CD8-positive, alpha-beta T cell (primary cell): ENCODE measurements at regions of chr16 and their contacts with region 1.

Region 1: DNA sequence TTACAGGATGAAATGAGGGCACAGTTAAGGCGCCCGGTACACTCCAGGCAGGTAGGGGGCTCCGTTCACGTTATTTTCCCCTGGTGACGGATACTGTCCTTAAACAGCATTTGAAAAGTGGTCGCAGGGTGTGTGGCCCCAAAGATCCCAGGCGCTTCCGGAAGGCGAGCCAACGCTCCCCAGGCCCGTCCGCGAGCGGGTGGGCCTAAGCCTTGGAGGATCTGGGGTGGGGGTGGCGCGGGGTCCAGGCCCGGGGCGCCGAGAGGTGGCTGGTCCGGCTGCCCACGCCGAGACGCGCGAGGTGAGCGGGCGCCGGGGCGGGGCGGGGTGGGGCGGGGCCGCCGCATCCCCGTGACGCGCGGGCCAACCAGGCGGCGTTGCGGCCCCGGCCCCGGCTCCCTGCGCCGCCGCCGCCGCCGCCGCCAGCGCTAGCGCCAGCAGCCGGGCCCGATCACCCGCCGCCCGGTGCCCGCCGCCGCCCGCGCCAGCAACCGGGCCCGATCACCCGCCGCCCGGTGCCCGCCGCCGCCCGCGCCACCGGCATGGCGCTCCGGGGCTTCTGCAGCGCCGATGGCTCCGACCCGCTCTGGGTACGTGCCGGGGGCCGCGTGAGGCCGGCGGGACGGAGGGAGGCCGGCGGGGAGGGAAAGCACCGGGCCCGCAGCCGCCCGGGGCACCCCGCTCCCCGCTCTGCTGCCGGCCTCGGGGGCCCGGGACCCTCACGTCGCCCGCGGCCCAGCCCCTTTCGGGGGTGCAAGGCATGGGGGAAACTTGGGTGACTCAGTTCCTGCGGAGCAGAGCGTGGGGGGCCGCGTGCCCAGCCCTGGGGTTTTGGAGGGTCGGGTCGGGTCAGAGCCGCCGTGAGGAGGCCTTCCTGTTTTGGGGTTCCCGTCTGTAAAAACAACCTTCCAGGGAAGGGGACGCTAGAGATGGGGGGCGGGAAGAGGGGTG is at the start of gene ABCC1:
- DNase-seq: peak; percentile 16 to 86 (median 72)
- ATAC-seq: peak; percentile 70
- H3K4me3 ChIP-seq: peak within 1 kb of the TSS; percentile 73 to 78
- H3K4me3 Mint-ChIP-seq: peak within 1 kb of the TSS; percentile 95
- H3K27ac ChIP-seq: peak within 1 kb of the TSS; percentile 75 to 77
- H3K27ac Mint-ChIP-seq: peak within 1 kb of the TSS; percentile 96
- H3K4me1 ChIP-seq: peaks cover 27% of the 10 kb centered on the region
- H3K4me1 Mint-ChIP-seq: peaks cover 34% of the 10 kb centered on the region
- H3K27me3 ChIP-seq: no peaks in the 10 kb centered on the region
- H3K27me3 Mint-ChIP-seq: no peaks in the 10 kb centered on the region
- CTCF ChIP-seq: peak; percentile 28
- total RNA-seq, gene ABCC1: 41.1 to 41.2 TPM

Region 2: DNA sequence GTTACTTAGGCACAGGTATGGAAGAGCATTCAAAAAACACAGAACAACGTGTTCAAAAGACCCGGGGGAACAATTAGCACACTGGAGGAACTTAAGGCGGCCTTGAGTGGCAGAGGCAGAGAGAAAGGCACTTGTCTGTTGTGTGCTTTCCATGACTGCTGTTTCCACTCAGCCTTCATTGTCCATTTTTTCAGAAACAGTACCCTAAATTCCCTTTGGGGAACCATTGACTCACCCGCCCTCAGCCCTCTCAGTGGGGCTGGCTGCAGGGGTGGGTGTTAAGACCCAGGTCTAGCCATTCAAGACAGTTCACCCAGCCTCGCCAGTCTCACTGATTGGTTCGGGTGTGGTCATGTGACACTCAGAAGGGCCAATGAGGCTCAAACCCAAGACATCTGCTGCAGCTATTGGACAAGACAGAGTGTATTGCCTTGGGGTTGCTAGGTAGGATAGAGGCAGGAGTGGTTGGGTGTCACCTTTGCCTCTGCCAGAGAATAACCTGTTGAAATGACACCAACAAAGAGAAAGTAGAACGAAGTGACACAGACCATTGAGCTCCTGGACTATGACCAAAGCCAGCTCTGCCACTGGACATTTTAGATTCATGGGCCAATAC is 41.5 kb before region 1 on chr16:
- CTCF ChIA-PET with region 1: no interaction called
- POLR2A ChIA-PET with region 1: no interaction called
- intact Hi-C with region 1: no loop called
- DNase-seq: peak in 3 of 9 experiments; percentile 35 to 59 (median 50)
- ATAC-seq: peak; percentile 89
- H3K4me3 ChIP-seq: no peak overlapping the region
- H3K4me3 Mint-ChIP-seq: no peak overlapping the region
- H3K27ac ChIP-seq: no peak overlapping the region
- H3K27ac Mint-ChIP-seq: no peak overlapping the region
- H3K4me1 ChIP-seq: peaks cover 8% of the 10 kb centered on the region
- H3K4me1 Mint-ChIP-seq: peaks cover 11% of the 10 kb centered on the region
- H3K27me3 ChIP-seq: no peaks in the 10 kb centered on the region
- H3K27me3 Mint-ChIP-seq: no peaks in the 10 kb centered on the region
- CTCF ChIP-seq: no peak

Region 3: DNA sequence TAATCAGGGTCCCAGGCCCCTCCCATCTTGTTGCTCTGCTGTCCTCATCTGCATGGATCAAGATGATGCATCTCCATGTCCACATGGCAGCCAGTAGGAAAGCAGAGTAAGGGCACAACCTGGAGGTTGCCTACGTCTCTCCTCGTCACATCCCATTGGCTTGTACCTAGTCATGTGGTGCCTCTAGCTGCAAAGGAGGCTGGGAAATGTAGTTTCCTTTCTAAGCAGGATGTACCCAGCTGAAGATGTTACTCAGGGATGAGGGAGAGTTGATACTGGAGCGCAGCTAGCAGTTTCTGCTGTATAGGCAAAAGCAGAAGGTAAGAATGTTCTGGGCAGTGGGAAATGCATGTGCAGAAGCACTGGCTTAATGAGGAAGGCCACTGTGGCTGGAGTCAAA is 20.7 kb after region 1 on chr16:
- CTCF ChIA-PET with region 1: no interaction called
- POLR2A ChIA-PET with region 1: no interaction called
- intact Hi-C with region 1: no loop called
- DNase-seq: peak in 2 of 9 experiments; percentile 32 to 53
- ATAC-seq: peak; percentile 75
- H3K4me3 ChIP-seq: no peak overlapping the region
- H3K4me3 Mint-ChIP-seq: no peak overlapping the region
- H3K27ac ChIP-seq: no peak overlapping the region
- H3K27ac Mint-ChIP-seq: no peak overlapping the region
- H3K4me1 ChIP-seq: peaks cover 8% of the 10 kb centered on the region
- H3K4me1 Mint-ChIP-seq: peaks cover 40% of the 10 kb centered on the region
- H3K27me3 ChIP-seq: no peaks in the 10 kb centered on the region
- H3K27me3 Mint-ChIP-seq: no peaks in the 10 kb centered on the region
- CTCF ChIP-seq: no peak

Region 4: GRCh38 chr16:15993946-15994665 is 44.6 kb after region 1 on chr16:
- CTCF ChIA-PET with region 1: no interaction called
- POLR2A ChIA-PET with region 1: no interaction called
- intact Hi-C with region 1: loop called in 1 of 2 experiments (anchors 5 kb)
- DNase-seq: no peak
- ATAC-seq: no peak
- H3K4me3 ChIP-seq: no peak overlapping the region
- H3K4me3 Mint-ChIP-seq: no peak overlapping the region
- H3K27ac ChIP-seq: no peak overlapping the region
- H3K27ac Mint-ChIP-seq: no peak overlapping the region
- H3K4me1 ChIP-seq: peaks cover 7% of the 10 kb centered on the region
- H3K4me1 Mint-ChIP-seq: peaks cover 51% of the 10 kb centered on the region
- H3K27me3 ChIP-seq: no peaks in the 10 kb centered on the region
- H3K27me3 Mint-ChIP-seq: no peaks in the 10 kb centered on the region
- CTCF ChIP-seq: no peak

Region 5: DNA sequence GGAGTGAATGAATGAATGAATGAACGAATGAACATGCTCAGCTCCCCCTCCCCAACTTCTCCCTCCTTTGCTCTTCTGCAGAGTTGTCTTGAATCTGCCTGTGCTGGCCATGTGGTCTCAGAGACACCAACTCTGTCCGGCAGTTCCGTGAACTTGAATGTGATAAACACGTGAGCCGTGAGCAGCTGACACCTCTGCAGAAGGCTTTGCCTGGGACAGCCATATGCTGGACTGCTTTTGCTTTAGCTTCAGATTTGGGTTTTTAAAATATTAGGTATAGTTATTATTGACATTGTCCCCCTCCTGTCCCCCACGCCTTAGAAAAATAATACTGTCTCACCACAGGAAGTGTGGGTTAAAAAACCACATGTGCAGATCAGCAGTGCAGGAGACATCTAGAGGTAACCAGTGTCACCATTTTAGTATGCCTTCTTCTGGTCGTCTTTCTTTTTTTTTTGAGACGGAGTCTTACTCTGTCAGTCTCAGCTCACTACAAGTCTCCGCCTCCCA is 83.8 kb after region 1 on chr16:
- CTCF ChIA-PET with region 1: interaction called, 4 read pairs
- POLR2A ChIA-PET with region 1: interaction called, 3 read pairs
- intact Hi-C with region 1: loop called (anchors 5 kb)
- DNase-seq: peak in 6 of 9 experiments; percentile 9 to 79 (median 41)
- ATAC-seq: peak; percentile 83
- H3K4me3 ChIP-seq: no peak overlapping the region
- H3K4me3 Mint-ChIP-seq: peak overlapping the region; percentile 37
- H3K27ac ChIP-seq: peak overlapping the region in 1 of 2 experiments; percentile 60
- H3K27ac Mint-ChIP-seq: peak overlapping the region; percentile 86
- H3K4me1 ChIP-seq: peaks cover 19% of the 10 kb centered on the region
- H3K4me1 Mint-ChIP-seq: peaks cover 23% of the 10 kb centered on the region
- H3K27me3 ChIP-seq: no peaks in the 10 kb centered on the region
- H3K27me3 Mint-ChIP-seq: no peaks in the 10 kb centered on the region
- CTCF ChIP-seq: no peak